K562 (cell line): ENCODE measurements at regions of chr16 and their contacts with region 1.

Region 1: DNA sequence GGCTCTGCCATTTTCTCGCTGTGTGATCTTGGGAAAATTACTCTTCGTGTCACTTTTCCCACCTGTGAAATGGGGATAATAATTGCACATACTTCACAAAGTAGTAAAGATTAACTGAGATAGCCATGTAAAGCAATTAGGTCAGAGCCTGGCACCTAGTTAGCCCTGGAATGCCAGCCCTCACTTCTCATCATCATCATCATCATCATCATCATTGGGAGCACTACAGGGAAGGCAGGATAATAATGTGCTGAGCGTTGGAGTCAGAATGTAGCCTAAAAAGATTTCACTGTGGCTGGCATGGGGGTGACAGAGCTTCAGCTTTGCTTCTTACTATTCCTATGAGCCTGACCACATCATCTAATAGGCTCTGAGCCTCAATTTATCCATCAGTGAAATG is 362.6 kb downstream of the TOX3 start:
- DNase-seq: no peak
- ATAC-seq: no peak
- H3K4me3 ChIP-seq: no peak overlapping the region
- H3K27ac ChIP-seq: no peak overlapping the region
- H3K4me1 ChIP-seq: no peaks in the 10 kb centered on the region
- H3K27me3 ChIP-seq: no peaks in the 10 kb centered on the region
- CTCF ChIP-seq: no peak
- EP300 ChIP-seq: no peak
- POLR2A ChIP-seq: no peak
- RAD21 ChIP-seq: no peak

Region 2: GRCh38 chr16:52101246-52101645 is 83.1 kb before region 1 on chr16:
- CTCF ChIA-PET with region 1: no interaction called
- POLR2A ChIA-PET with region 1: no interaction called
- in situ Hi-C with region 1: no loop called
- intact Hi-C with region 1: no loop called
- DNase-seq: no peak
- ATAC-seq: no peak
- H3K4me3 ChIP-seq: no peak overlapping the region
- H3K27ac ChIP-seq: no peak overlapping the region
- H3K4me1 ChIP-seq: no peaks in the 10 kb centered on the region
- H3K27me3 ChIP-seq: no peaks in the 10 kb centered on the region
- CTCF ChIP-seq: no peak
- EP300 ChIP-seq: no peak
- POLR2A ChIP-seq: no peak
- RAD21 ChIP-seq: no peak

Region 3: GRCh38 chr16:52141871-52142270 is 42.5 kb before region 1 on chr16:
- CTCF ChIA-PET with region 1: no interaction called
- POLR2A ChIA-PET with region 1: no interaction called
- in situ Hi-C with region 1: no loop called
- intact Hi-C with region 1: no loop called
- DNase-seq: no peak
- ATAC-seq: no peak
- H3K4me3 ChIP-seq: no peak overlapping the region
- H3K27ac ChIP-seq: no peak overlapping the region
- H3K4me1 ChIP-seq: no peaks in the 10 kb centered on the region
- H3K27me3 ChIP-seq: no peaks in the 10 kb centered on the region
- CTCF ChIP-seq: no peak
- EP300 ChIP-seq: no peak
- POLR2A ChIP-seq: no peak
- RAD21 ChIP-seq: no peak

Region 4: GRCh38 chr16:52171481-52171880 is 12.9 kb before region 1 on chr16:
- CTCF ChIA-PET with region 1: no interaction called
- POLR2A ChIA-PET with region 1: no interaction called
- in situ Hi-C with region 1: no loop called
- intact Hi-C with region 1: no loop called
- DNase-seq: no peak
- ATAC-seq: no peak
- H3K4me3 ChIP-seq: no peak overlapping the region
- H3K27ac ChIP-seq: no peak overlapping the region
- H3K4me1 ChIP-seq: no peaks in the 10 kb centered on the region
- H3K27me3 ChIP-seq: no peaks in the 10 kb centered on the region
- CTCF ChIP-seq: no peak
- EP300 ChIP-seq: no peak
- POLR2A ChIP-seq: no peak
- RAD21 ChIP-seq: no peak

Region 5: GRCh38 chr16:52265446-52265861 is 81.1 kb after region 1 on chr16:
- CTCF ChIA-PET with region 1: no interaction called
- POLR2A ChIA-PET with region 1: no interaction called
- in situ Hi-C with region 1: no loop called
- intact Hi-C with region 1: no loop called
- DNase-seq: no peak
- ATAC-seq: no peak
- H3K4me3 ChIP-seq: no peak overlapping the region
- H3K27ac ChIP-seq: no peak overlapping the region
- H3K4me1 ChIP-seq: no peaks in the 10 kb centered on the region
- H3K27me3 ChIP-seq: no peaks in the 10 kb centered on the region
- CTCF ChIP-seq: no peak
- EP300 ChIP-seq: no peak
- POLR2A ChIP-seq: no peak
- RAD21 ChIP-seq: no peak

Region 6: DNA sequence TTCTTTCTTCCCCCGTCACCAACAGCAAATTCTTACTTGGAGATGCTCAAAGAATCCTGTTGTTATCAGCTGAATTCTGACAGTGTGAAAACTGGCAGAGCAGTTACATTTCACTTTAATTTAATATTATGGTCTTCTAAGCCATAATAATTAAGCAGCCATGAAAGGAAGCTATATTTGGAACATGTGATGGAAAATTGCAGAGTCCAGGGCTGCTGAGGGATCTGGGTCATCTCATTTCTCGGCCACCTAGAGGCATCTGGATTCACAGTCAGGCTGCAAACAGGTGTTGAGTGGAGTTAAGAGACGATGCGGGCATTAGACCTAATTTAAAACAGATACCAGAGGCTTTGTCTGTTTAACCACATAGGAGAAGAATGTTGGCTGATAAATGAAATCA is 830.0 kb after region 1 on chr16:
- CTCF ChIA-PET with region 1: no interaction called
- POLR2A ChIA-PET with region 1: no interaction called
- in situ Hi-C with region 1: loop called (anchors 10 kb)
- intact Hi-C with region 1: no loop called
- DNase-seq: no peak
- ATAC-seq: no peak
- H3K4me3 ChIP-seq: no peak overlapping the region
- H3K27ac ChIP-seq: no peak overlapping the region
- H3K4me1 ChIP-seq: no peaks in the 10 kb centered on the region
- H3K27me3 ChIP-seq: no peaks in the 10 kb centered on the region
- CTCF ChIP-seq: no peak
- EP300 ChIP-seq: no peak
- POLR2A ChIP-seq: no peak
- RAD21 ChIP-seq: no peak